PC-9 (cell line): ENCODE measurements at regions of chr4 and their contacts with region 1.

Region 1: DNA sequence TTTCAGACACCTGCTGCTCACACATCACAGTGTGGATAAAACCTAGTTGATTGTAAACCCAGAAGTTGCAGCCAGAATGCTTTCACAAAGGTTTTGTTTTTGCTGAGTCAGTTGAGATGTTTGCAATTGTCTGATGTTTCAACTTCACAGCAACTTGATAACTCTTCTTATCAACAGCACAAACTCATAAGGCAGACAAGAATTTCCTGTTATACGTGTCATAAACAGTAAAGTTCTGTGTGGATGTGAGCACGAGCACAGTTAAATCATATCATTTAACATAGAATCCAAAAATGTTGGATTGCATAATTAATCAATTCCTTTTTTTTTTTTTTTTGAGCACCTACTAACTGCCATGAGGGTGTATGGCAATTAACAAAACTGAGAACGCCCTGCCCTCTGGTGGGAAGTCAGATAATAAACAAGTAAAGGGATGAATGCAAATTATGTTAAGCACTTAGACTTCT is 512.2 kb downstream of the PDHA2 start:
- DNase-seq: no peak
- H3K4me3 ChIP-seq: no peak overlapping the region
- H3K27ac ChIP-seq: no peak overlapping the region
- H3K4me1 ChIP-seq: no peaks in the 10 kb centered on the region
- H3K27me3 ChIP-seq: no peaks in the 10 kb centered on the region
- CTCF ChIP-seq: 0 out of 2 replicates have a peak, but pooled peaks have one; percentile 25

Region 2: DNA sequence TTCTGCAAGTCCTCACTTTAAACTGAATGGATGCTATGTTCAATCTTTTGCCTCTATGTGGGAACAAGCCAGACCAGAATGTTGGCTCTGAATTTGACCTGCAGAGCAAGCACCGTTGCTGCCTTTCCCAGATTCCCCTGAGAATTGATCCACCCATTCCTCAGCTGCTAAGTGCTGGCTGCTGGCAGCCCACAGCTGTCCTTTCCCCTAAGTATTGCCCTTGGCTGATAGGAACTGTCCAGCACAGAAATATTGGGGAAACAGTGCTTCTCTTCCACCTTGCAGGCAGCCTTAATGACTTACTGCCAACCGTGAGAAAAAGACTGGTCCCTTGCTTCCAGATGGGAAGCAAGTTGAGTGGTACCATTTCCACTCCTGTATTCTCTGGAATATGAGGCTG is 36.3 kb before region 1 on chr4:
- CTCF ChIA-PET with region 1: no interaction called
- POLR2A ChIA-PET with region 1: no interaction called
- intact Hi-C with region 1: no loop called
- DNase-seq: no peak
- H3K4me3 ChIP-seq: no peak overlapping the region
- H3K27ac ChIP-seq: no peak overlapping the region
- H3K4me1 ChIP-seq: no peaks in the 10 kb centered on the region
- H3K27me3 ChIP-seq: no peaks in the 10 kb centered on the region
- CTCF ChIP-seq: no peak

Region 3: DNA sequence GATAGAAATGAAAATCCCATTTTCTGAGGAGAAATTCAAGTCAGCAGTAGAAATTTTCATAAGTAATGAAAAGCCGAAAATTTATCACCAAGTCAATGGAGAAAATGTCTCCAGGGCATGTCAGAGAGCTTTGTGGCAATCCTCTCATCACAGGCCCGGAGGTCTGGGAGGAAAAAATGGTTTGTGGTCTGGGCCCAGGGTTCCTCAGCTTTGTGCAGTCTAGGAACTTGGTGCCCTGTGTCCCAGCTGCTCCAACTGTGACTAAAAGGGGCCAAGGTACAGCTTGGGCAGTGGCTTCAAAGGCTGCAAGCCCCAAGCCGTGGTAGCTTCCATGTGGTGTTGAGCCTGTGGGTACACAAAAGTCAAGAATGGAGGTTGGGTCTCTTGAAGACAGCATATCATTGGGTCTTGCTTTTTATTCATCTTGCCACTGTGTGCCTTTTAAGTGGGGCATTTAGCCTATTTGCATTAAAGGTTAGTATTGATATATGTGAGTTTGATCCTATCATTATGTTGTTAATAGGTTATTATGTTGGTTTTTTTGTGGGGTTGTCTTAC is 96.3 kb after region 1 on chr4:
- CTCF ChIA-PET with region 1: no interaction called
- POLR2A ChIA-PET with region 1: interaction called, 10 read pairs
- intact Hi-C with region 1: no loop called
- DNase-seq: no peak
- H3K4me3 ChIP-seq: no peak overlapping the region
- H3K27ac ChIP-seq: no peak overlapping the region
- H3K4me1 ChIP-seq: no peaks in the 10 kb centered on the region
- H3K27me3 ChIP-seq: no peaks in the 10 kb centered on the region
- CTCF ChIP-seq: no peak